CD14-positive monocyte (primary cell): ENCODE measurements at regions of chr14 and their contacts with region 1.

Region 1: DNA sequence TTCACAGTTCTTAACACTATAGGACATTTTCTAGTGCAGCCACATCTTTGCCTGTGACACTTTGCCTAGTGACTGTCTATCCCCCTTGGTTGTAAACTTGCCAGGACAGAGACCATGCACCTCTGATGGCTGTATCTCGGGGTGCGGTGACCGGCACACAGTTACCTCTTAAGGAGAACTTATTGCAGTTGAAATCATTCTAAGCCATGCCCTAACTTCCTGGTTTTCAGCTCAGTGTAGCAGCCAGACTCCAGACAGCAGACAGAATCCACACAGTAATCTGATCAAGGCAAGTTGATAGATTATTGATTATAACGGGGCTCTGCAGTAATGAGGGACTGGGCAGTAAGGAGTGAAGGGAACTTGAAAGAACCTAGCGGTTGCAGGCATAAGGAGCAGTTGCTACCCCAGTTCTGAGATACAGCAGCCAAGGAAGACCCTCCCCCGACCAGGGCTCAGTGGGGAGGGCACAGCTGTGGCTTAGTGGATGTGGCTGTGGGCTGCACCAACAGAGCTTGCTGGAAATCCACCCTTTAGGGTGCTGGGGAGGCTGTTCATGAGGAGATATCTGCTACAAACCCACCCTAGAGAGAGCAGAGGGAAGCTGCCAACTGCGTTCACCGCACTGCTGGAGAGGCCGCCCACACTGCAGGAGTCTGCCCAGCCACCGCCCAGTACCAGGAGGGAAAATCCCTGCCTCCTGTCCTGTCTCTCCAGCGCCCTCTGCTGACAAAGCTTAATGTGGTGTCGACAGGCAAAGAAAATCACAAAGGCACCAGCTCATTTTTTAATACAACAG is 58.2 kb upstream of the BEGAIN start:
- DNase-seq: peak; percentile 81 to 86 (median 84)
- H3K4me3 ChIP-seq: peak overlapping the region in 2 of 3 experiments; percentile 6 to 45
- H3K4me3 Mint-ChIP-seq: peak overlapping the region; percentile 57 to 79
- H3K27ac ChIP-seq: no peak overlapping the region
- H3K27ac Mint-ChIP-seq: peak overlapping the region in 3 of 7 donors; percentile 4 to 29 (median 16)
- H3K4me1 ChIP-seq: peaks cover 13% of the 10 kb centered on the region in 2 donors
- H3K4me1 Mint-ChIP-seq: peaks cover 18% of the 10 kb centered on the region
- H3K27me3 ChIP-seq: peaks cover 3 to 11% of the 10 kb centered on the region in 2 donors
- H3K27me3 Mint-ChIP-seq: peaks cover 10 to 34% (median 31%) of the 10 kb centered on the region in 3 donors
- CTCF ChIP-seq: peak; percentile 84

Region 2: DNA sequence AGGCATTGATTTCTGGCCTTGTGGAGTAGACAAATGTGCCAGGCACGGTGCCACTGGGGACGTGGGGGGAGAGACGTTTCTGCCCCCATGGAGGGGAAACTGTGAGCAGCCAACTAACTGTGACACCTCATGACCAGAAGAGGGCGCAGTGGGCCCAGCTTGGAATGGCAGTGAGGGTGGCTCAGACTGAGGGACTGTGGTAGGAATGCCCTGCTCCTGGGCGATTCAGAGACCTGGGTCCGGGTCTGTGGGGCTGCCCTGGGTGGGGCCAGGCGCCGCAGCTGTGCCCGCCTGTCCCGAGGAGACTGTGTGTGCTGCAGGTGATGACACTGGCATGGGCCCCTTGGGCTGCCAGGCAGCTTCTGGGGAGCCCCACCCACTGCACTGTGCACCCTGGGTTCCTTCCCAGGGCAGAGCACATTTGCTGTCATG is 261.6 kb before region 1 on chr14:
- intact Hi-C with region 1: loop called (anchors 1 to 2 kb)
- DNase-seq: peak; percentile 56 to 68 (median 67)
- H3K4me3 ChIP-seq: no peak overlapping the region
- H3K4me3 Mint-ChIP-seq: no peak overlapping the region
- H3K27ac ChIP-seq: no peak overlapping the region
- H3K27ac Mint-ChIP-seq: peak overlapping the region in 2 of 7 donors; percentile 12 to 79
- H3K4me1 ChIP-seq: peaks cover 3% of the 10 kb centered on the region in 2 donors
- H3K4me1 Mint-ChIP-seq: peaks cover 10% of the 10 kb centered on the region
- H3K27me3 ChIP-seq: no peaks in the 10 kb centered on the region
- H3K27me3 Mint-ChIP-seq: no peaks in the 10 kb centered on the region
- CTCF ChIP-seq: peak; percentile 94

Region 3: DNA sequence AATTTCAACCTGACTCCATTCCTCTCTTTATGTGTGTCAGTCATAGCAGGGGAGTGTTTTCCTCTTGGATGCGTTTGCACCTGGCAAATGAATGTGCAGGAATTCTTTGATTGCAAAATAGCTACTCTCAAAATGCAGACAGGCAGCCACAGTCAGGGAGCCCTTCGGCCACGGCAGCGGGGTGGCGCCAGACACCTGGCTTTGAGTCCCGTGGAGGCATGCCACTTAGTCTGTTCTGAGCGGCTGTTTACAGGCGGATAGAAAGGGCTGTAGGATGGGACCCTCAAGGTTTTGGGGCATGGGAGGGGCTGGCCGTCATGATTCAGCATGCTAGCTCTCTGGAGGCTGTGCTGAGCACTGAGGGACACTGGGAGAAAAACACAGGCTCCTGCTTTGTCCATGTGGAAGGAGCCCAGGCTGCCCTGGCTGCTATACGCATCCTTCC is 205.2 kb before region 1 on chr14:
- intact Hi-C with region 1: loop called (anchors 2 to 5 kb)
- DNase-seq: peak in 2 of 3 donors; percentile 26 to 51
- H3K4me3 ChIP-seq: no peak overlapping the region
- H3K4me3 Mint-ChIP-seq: no peak overlapping the region
- H3K27ac ChIP-seq: no peak overlapping the region
- H3K27ac Mint-ChIP-seq: peak overlapping the region in 2 of 7 donors; percentile 15 to 54
- H3K4me1 ChIP-seq: peaks cover 13% of the 10 kb centered on the region in 2 donors
- H3K4me1 Mint-ChIP-seq: peaks cover 36% of the 10 kb centered on the region
- H3K27me3 ChIP-seq: no peaks in the 10 kb centered on the region
- H3K27me3 Mint-ChIP-seq: no peaks in the 10 kb centered on the region
- CTCF ChIP-seq: peak; percentile 81

Region 4: DNA sequence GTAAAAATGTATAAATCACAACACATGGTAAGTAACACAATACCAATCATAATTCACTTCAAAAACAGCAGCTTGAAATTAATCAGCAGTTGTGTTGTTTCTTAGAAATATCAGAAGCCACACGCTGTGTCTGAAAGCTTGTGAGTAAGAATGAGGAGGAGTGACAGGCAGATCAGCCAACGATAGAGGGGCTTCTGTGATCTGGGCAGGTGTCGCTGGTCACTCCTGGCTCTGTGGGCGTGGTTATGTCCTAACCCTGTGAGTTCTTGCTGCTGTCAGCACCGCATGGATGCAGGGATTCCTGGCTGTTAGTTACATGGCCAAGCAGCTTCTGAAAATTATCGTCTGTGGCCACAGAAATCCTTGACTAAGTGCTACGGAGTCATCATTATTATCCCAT is 198.8 kb before region 1 on chr14:
- intact Hi-C with region 1: loop called (anchors 2 to 5 kb)
- DNase-seq: no peak
- H3K4me3 ChIP-seq: no peak overlapping the region
- H3K4me3 Mint-ChIP-seq: no peak overlapping the region
- H3K27ac ChIP-seq: no peak overlapping the region
- H3K27ac Mint-ChIP-seq: no peak overlapping the region
- H3K4me1 ChIP-seq: peaks cover 6 to 11% of the 10 kb centered on the region in 2 donors
- H3K4me1 Mint-ChIP-seq: peaks cover 16% of the 10 kb centered on the region
- H3K27me3 ChIP-seq: no peaks in the 10 kb centered on the region
- H3K27me3 Mint-ChIP-seq: no peaks in the 10 kb centered on the region
- CTCF ChIP-seq: no peak

Region 5: GRCh38 chr14:100547633-100548294 is 97.6 kb before region 1 on chr14:
- intact Hi-C with region 1: loop called in 1 of 2 experiments (anchors 5 kb)
- DNase-seq: peak; percentile 86 to 95 (median 93)
- H3K4me3 ChIP-seq: peak overlapping the region in 1 of 3 experiments; percentile 71
- H3K4me3 Mint-ChIP-seq: peak overlapping the region; percentile 84 to 93
- H3K27ac ChIP-seq: peak overlapping the region; percentile 78 to 99
- H3K27ac Mint-ChIP-seq: peak overlapping the region; percentile 87 to 99 (median 94)
- H3K4me1 ChIP-seq: peaks cover 28 to 32% of the 10 kb centered on the region in 2 donors
- H3K4me1 Mint-ChIP-seq: peaks cover 39% of the 10 kb centered on the region
- H3K27me3 ChIP-seq: no peaks in the 10 kb centered on the region
- H3K27me3 Mint-ChIP-seq: peaks cover 6 to 25% (median 17%) of the 10 kb centered on the region in 3 donors
- CTCF ChIP-seq: no peak

Region 6: GRCh38 chr14:100587086-100587949 is 58.1 kb before region 1 on chr14 and contains the start of gene BEGAIN:
- intact Hi-C with region 1: no loop called
- DNase-seq: no peak
- H3K4me3 ChIP-seq: peak within 1 kb of the TSS in 2 of 3 experiments; percentile 21 to 64
- H3K4me3 Mint-ChIP-seq: peak within 1 kb of the TSS; percentile 49 to 85
- H3K27ac ChIP-seq: no peak within 1 kb of the TSS
- H3K27ac Mint-ChIP-seq: no peak within 1 kb of the TSS
- H3K4me1 ChIP-seq: peaks cover 8 to 10% of the 10 kb centered on the region in 2 donors
- H3K4me1 Mint-ChIP-seq: peaks cover 5% of the 10 kb centered on the region
- H3K27me3 ChIP-seq: peaks cover 16 to 49% of the 10 kb centered on the region in 2 donors
- H3K27me3 Mint-ChIP-seq: peaks cover 33 to 60% (median 56%) of the 10 kb centered on the region in 3 donors
- CTCF ChIP-seq: no peak
- polyA plus RNA-seq, gene BEGAIN: 0.25 to 0.45 TPM in 2 of 3 donors, not detected in the other

Region 7: GRCh38 chr14:101225450-101226152 is 580.2 kb after region 1 on chr14:
- intact Hi-C with region 1: no loop called
- DNase-seq: no peak
- H3K4me3 ChIP-seq: no peak overlapping the region
- H3K4me3 Mint-ChIP-seq: no peak overlapping the region
- H3K27ac ChIP-seq: no peak overlapping the region
- H3K27ac Mint-ChIP-seq: no peak overlapping the region
- H3K4me1 ChIP-seq: no peaks in the 10 kb centered on the region
- H3K4me1 Mint-ChIP-seq: no peaks in the 10 kb centered on the region
- H3K27me3 ChIP-seq: no peaks in the 10 kb centered on the region
- H3K27me3 Mint-ChIP-seq: peaks cover 1 to 6% (median 2%) of the 10 kb centered on the region in 3 donors
- CTCF ChIP-seq: no peak